Calu3 (cell line): ENCODE measurements at regions of chr12 and their contacts with region 1.

Region 1: GRCh38 chr12:32302218-32303173 is 96.9 kb upstream of the FGD4 start:
- DNase-seq: peak; percentile 46
- H3K4me3 Mint-ChIP-seq: no peak overlapping the region
- H3K27ac Mint-ChIP-seq: no peak overlapping the region
- H3K4me1 Mint-ChIP-seq: no peaks in the 10 kb centered on the region
- H3K27me3 Mint-ChIP-seq: no peaks in the 10 kb centered on the region
- CTCF ChIP-seq: no peak

Region 2: DNA sequence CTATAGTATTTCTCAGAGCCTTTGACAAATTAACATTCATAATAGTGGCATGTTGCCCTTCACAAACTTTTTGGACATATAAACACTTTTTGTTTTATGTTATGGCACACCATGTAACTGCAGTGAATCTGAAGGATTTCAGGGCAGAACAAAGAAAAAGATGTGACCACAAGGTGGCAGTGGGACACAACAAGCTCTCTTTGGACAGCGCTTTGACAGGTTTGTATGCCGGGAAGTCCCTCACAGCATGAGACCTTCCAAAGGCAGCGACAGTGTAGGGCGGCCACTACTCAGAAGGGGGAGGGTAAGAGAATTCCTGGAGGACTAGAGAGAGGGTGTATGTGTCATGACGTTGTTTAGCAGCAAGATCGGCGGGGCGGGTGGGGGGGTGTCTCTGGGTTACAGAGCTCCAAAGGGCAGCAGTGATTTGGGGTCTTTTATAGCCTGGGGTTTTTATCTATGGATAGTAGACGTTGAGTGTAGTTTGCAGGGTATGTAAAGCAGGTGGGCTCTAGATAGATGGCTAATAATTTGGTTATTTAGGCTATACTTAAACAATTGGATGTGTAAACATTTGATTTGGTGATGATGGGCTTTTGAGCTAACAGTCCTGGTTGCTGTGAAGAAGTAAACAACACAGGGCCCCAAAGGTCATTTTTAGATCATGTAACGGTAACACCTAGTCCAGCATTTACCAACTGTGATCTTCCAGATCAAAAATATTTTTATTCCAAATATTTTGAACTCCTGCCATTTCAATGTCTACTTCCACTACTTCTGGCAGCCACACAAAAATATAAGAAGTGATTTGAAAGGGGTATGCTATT is 620.1 kb before region 1 on chr12:
- CTCF ChIA-PET with region 1: no interaction called
- intact Hi-C with region 1: loop called (anchors 1 kb)
- DNase-seq: peak; percentile 81
- H3K4me3 Mint-ChIP-seq: peak overlapping the region; percentile 2
- H3K27ac Mint-ChIP-seq: peak overlapping the region; percentile 54
- H3K4me1 Mint-ChIP-seq: peaks cover 10% of the 10 kb centered on the region
- H3K27me3 Mint-ChIP-seq: no peaks in the 10 kb centered on the region
- CTCF ChIP-seq: peak; percentile 84

Region 3: GRCh38 chr12:32139064-32139421 is 163.5 kb before region 1 on chr12:
- CTCF ChIA-PET with region 1: no interaction called
- intact Hi-C with region 1: loop called (anchors 10 kb)
- DNase-seq: no peak
- H3K4me3 Mint-ChIP-seq: no peak overlapping the region
- H3K27ac Mint-ChIP-seq: no peak overlapping the region
- H3K4me1 Mint-ChIP-seq: peaks cover 22% of the 10 kb centered on the region
- H3K27me3 Mint-ChIP-seq: no peaks in the 10 kb centered on the region
- CTCF ChIP-seq: no peak